ENCODE measurements at regions of chr17 and their contacts with region 1.

Region 1: DNA sequence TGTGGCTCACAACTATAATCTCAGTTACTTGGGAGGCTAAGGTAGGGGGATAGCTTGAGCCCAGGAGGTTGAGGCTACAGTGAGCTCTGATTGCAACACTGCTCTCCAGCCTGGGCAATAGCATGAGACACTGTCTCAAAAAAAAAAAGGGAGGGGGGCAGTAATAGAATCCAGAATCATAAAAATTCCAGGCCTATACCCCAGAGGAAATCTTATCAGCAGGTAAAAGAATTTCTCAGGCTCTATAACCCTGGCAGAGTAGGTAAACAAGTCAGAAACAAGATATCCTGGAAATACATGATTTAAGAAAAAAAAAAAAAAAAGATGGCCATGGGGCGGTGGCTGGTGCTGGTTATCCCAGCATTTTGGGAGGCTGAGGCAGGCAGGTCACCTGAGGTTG is 12.9 kb downstream of the SPAG9 start:
- DNase-seq: peak; percentile 78 to 82
- H3K4me3 ChIP-seq: no peak overlapping the region
- H3K4me3 Mint-ChIP-seq: peak overlapping the region; percentile 22
- H3K27ac Mint-ChIP-seq: peak overlapping the region; percentile 72
- H3K4me1 ChIP-seq: peaks cover 63% of the 10 kb centered on the region
- H3K4me1 Mint-ChIP-seq: peaks cover 27% of the 10 kb centered on the region
- H3K27me3 ChIP-seq: no peaks in the 10 kb centered on the region
- H3K27me3 Mint-ChIP-seq: no peaks in the 10 kb centered on the region
- CTCF ChIP-seq: no peak

Region 2: GRCh38 chr17:50904521-50905459 is 203.0 kb before region 1 on chr17:
- CTCF ChIA-PET with region 1: no interaction called
- POLR2A ChIA-PET with region 1: no interaction called
- intact Hi-C with region 1: no loop called
- DNase-seq: peak; percentile 83 to 86
- H3K4me3 ChIP-seq: peak overlapping the region; percentile 11
- H3K4me3 Mint-ChIP-seq: peak overlapping the region; percentile 51
- H3K27ac Mint-ChIP-seq: peak overlapping the region; percentile 87
- H3K4me1 ChIP-seq: peaks cover 48% of the 10 kb centered on the region
- H3K4me1 Mint-ChIP-seq: peaks cover 46% of the 10 kb centered on the region
- H3K27me3 ChIP-seq: no peaks in the 10 kb centered on the region
- H3K27me3 Mint-ChIP-seq: no peaks in the 10 kb centered on the region
- CTCF ChIP-seq: peak; percentile 1 to 26

Region 3: DNA sequence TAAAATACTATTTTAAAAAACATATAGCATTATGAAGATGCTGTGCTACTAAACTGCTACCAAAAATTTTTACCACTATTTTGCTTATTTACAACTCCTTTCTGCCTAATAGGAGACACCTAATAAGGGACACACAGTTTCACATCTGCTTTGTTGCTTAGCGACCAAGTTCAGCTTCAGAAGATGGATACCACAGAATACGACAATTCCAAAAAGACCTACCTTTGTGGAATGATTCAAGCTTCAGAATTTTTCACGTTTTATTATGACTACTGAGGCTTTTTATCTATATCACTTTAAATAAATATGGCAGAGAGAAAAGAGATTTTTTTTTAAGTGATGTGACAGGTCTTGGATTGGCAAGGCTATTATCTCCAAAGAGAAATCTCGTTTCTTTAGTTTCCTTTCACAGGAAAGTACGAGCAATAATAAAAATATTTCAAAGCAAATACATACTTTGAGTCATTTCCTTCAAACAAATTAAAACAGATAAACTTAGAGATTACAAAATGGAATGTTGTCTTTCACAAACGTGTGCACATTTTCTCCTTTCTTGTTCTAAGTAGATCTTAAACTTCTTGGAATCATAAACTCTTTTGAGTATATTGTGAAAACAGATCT is 22.5 kb before region 1 on chr17:
- CTCF ChIA-PET with region 1: no interaction called
- POLR2A ChIA-PET with region 1: no interaction called
- intact Hi-C with region 1: loop called (anchors 2 kb)
- DNase-seq: peak in 1 of 2 experiments; percentile 38
- H3K4me3 ChIP-seq: no peak overlapping the region
- H3K4me3 Mint-ChIP-seq: peak overlapping the region; percentile 18
- H3K27ac Mint-ChIP-seq: peak overlapping the region; percentile 58
- H3K4me1 ChIP-seq: peaks cover 34% of the 10 kb centered on the region
- H3K4me1 Mint-ChIP-seq: peaks cover 16% of the 10 kb centered on the region
- H3K27me3 ChIP-seq: no peaks in the 10 kb centered on the region
- H3K27me3 Mint-ChIP-seq: no peaks in the 10 kb centered on the region
- CTCF ChIP-seq: no peak

Region 4: GRCh38 chr17:51153210-51154072 is 45.7 kb after region 1 on chr17 and contains the start of gene NME1:
- CTCF ChIA-PET with region 1: interaction called, 4 read pairs
- POLR2A ChIA-PET with region 1: interaction called, 5 read pairs
- intact Hi-C with region 1: loop called (anchors 1 kb)
- DNase-seq: peak; percentile 98 to 99
- H3K4me3 ChIP-seq: peak within 1 kb of the TSS; percentile 69
- H3K4me3 Mint-ChIP-seq: no peak within 1 kb of the TSS
- H3K27ac Mint-ChIP-seq: no peak within 1 kb of the TSS
- H3K4me1 ChIP-seq: peaks cover 9% of the 10 kb centered on the region
- H3K4me1 Mint-ChIP-seq: no peaks in the 10 kb centered on the region
- H3K27me3 ChIP-seq: no peaks in the 10 kb centered on the region
- H3K27me3 Mint-ChIP-seq: no peaks in the 10 kb centered on the region
- CTCF ChIP-seq: peak; percentile 65 to 89
- total RNA-seq, gene NME1: 278 and 336 TPM in 2 replicates

Region 5: GRCh38 chr17:51260881-51261568 is 153.2 kb after region 1 on chr17:
- CTCF ChIA-PET with region 1: no interaction called
- POLR2A ChIA-PET with region 1: no interaction called
- intact Hi-C with region 1: no loop called
- DNase-seq: peak; percentile 71 to 86
- H3K4me3 ChIP-seq: peak overlapping the region; percentile 87
- H3K4me3 Mint-ChIP-seq: peak overlapping the region; percentile 66
- H3K27ac Mint-ChIP-seq: peak overlapping the region; percentile 97
- H3K4me1 ChIP-seq: peaks cover 5% of the 10 kb centered on the region; the same call in 1 of the 2 replicates
- H3K4me1 Mint-ChIP-seq: peaks cover 29% of the 10 kb centered on the region
- H3K27me3 ChIP-seq: no peaks in the 10 kb centered on the region
- H3K27me3 Mint-ChIP-seq: no peaks in the 10 kb centered on the region
- CTCF ChIP-seq: no peak

Measured in Caco-2 (cell line).